ENCODE measurements at regions of chr9 and their contacts with region 1.

Region 1: GRCh38 chr9:134260801-134261200 is 65.5 kb upstream of the RXRA start:
- DNase-seq: no peak

Region 2: GRCh38 chr9:134221273-134222052 is 39.3 kb before region 1 on chr9:
- intact Hi-C with region 1: loop called (anchors 2 kb)
- DNase-seq: no peak

Region 3: GRCh38 chr9:134283111-134283515 is 22.3 kb after region 1 on chr9:
- intact Hi-C with region 1: no loop called
- DNase-seq: no peak

Region 4: DNA sequence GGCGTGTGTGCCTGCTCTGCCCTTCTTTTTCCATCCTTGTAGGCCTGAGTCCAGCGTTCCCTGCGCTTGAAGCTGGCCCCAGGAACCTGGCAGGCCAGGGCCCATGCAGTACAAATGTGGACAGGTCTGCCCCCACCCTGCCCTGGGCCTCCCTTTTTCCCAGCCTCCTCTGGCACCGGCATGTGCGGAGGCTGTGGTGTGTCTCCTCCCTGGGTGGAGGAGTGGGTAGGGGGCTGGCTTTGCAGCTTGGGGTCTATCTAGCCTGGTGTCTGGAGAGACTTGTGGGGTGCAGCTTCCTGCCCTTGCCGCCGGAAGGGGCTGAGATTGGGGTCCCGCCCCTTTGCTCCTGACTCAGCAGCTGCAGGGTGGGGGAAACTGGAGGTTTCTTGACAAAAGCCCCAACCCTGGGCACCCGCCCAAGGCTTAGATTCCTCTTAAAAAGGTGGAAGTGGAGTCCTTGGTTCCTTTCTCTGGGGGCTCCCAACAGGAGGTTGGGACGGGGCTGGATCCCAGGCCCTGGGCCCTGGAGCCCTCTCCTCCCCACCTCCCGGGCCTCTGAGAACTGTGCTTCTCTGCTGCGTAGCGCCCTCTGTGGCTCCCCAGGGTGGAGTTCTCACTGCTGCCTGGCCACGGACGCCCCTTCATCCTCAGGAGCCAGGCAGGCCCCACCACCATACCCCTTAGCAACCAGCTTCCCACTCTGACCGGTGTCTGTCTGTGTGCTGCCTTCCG is 83.4 kb after region 1 on chr9:
- intact Hi-C with region 1: no loop called
- DNase-seq: peak; percentile 84

Measured in cardiac septum (tissue), 1 donor.